HEK293 (cell line): ENCODE measurements at regions of chr6 and their contacts with region 1.

Region 1: DNA sequence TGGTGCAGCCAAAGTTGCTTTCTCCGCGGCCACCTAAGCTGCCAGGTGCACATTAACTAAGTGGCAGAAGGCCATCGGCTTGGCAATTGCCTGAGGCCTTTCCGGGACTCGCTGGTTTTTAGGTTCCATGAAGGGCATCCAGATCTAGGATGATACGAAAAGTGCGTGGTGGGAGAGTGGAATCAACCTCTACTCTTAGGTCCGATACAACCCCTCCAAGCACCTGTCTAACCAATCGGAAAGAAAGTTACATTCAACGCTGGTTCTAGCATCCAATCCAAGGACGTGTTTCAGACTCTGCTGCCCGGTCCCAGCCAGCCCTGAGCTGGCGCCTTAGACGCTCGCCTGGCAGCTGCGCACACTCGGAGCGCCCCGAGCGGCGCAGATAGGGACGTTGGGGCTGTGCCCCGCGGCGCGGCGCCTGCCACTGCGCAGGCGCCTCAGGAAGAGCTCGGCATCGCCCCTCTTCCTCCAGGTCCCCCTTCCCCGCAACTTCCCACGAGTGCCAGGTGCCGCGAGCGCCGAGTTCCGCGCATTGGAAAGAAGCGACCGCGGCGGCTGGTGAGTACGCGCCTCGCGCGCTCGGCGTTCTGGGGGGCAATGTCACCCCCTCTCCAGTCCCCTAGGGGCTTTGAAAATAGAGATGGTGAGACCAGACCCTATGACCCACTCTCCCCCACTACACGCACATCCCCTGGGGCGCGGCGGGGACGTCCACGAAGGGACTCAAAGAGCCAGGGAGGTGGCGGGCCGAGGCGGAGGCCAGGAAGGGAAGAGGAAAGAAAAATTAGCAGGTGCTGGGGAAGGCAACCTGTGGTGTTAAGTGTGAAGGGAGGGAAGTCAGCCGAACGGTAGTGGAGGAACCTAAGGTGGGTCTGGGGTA is at the start of gene ENPP4:
- H3K4me3 ChIP-seq: peak within 1 kb of the TSS; percentile 88
- H3K27ac ChIP-seq: peak within 1 kb of the TSS; percentile 46; the same call in 1 of the 2 replicates
- H3K4me1 ChIP-seq: no peaks in the 10 kb centered on the region
- CTCF ChIP-seq: no peak

Region 2: GRCh38 chr6:45377043-45377553 is 752.8 kb before region 1 on chr6:
- CTCF ChIA-PET with region 1: no interaction called
- POLR2A ChIA-PET with region 1: no interaction called
- H3K4me3 ChIP-seq: peak overlapping the region; percentile 95
- H3K27ac ChIP-seq: peak overlapping the region; percentile 95
- H3K4me1 ChIP-seq: 0 out of 2 replicates have a peak, but pooled peaks cover 4% of the 10 kb centered on the region
- CTCF ChIP-seq: no peak; the same call in 1 of the 2 replicates

Region 3: DNA sequence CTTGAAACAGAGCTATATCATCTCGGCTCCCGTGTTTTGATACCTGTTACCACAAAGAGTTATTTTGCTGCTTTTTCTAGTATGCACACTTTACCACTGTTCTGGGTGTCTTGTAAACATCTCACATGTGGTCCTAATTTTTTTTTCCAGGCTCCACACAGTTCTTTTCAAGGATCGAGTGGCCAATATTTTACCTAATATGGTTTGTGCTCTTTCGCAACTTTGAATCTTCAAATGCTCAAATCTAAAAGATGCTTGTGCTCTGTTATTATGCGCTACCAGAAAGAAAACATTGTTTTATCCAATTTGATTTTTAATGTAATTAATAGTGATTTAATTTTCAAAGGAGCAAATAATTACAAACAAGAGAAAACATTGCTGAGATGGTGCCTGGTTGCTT is 30.2 kb after region 1 on chr6:
- CTCF ChIA-PET with region 1: no interaction called
- POLR2A ChIA-PET with region 1: no interaction called
- H3K4me3 ChIP-seq: no peak overlapping the region
- H3K27ac ChIP-seq: no peak overlapping the region
- H3K4me1 ChIP-seq: no peaks in the 10 kb centered on the region
- CTCF ChIP-seq: no peak

Region 4: DNA sequence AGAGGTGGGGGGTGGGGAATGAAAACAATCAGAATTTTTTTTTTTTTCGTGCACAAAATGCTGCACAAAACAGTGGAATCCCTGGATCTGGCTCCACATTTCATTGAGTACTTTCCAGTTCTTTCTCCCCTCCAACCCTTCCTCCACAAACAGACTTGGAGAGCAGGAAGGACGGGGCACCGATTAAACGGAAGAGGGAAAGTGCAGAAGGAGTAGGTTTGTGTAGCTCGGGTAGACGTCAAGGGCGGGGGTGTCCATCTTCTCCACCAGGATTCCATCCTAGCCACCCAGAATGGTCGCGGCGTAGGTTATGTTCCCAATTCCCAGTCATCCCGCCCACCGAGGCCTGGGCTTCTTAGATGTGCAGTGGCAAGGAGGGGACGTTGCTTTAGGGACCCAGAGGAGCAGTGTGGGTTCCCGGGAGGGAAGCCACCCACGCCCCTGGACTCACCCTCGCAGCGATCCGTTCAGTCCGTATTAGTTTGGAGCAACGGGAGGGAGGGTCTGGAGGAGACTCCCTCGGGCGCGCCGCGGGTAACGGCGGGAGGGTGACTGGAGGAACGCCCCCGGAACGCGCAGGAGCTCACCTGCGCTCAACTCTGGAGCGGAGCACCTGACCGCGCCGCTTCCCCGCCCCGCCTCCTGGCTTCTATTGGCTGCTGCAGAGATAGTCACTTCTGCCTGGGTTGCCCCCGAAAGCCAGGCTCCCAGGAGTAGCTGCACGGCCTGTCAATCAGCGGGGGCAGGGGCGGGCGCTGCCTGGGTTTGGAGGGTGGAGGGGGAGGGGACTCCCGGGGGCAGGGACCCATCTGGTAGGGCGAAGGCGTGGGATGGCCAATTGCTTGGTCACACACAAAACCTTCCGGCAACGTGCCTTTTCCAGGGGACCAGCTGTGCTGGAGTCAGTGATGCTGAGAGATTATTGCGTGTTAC is 40.8 kb after region 1 on chr6 and contains the start of gene ENPP5:
- CTCF ChIA-PET with region 1: no interaction called
- POLR2A ChIA-PET with region 1: interaction called, 12 read pairs
- H3K4me3 ChIP-seq: peak within 1 kb of the TSS; percentile 64
- H3K27ac ChIP-seq: peak within 1 kb of the TSS; percentile 13; the same call in 1 of the 2 replicates
- H3K4me1 ChIP-seq: peaks cover 7% of the 10 kb centered on the region
- CTCF ChIP-seq: no peak